Aorta (tissue), 5 donors: ENCODE measurements at regions of chrX and their contacts with region 1.

Region 1: GRCh38 chrX:17788439-17788838 is 51.1 kb downstream of the SCML1 start:
- DNase-seq: peak in 1 of 2 donors; percentile 79
- ATAC-seq: peak; percentile 84
- H3K4me3 ChIP-seq: no peak overlapping the region
- H3K27ac ChIP-seq: no peak overlapping the region
- H3K4me1 ChIP-seq: no peaks in the 10 kb centered on the region
- H3K27me3 ChIP-seq: no peaks in the 10 kb centered on the region

Region 2: GRCh38 chrX:16979226-16979625 is 809.2 kb before region 1 on chrX:
- intact Hi-C with region 1: no loop called
- DNase-seq: no peak
- ATAC-seq: no peak
- H3K4me3 ChIP-seq: no peak overlapping the region
- H3K27ac ChIP-seq: no peak overlapping the region
- H3K4me1 ChIP-seq: no peaks in the 10 kb centered on the region
- H3K27me3 ChIP-seq: no peaks in the 10 kb centered on the region

Region 3: DNA sequence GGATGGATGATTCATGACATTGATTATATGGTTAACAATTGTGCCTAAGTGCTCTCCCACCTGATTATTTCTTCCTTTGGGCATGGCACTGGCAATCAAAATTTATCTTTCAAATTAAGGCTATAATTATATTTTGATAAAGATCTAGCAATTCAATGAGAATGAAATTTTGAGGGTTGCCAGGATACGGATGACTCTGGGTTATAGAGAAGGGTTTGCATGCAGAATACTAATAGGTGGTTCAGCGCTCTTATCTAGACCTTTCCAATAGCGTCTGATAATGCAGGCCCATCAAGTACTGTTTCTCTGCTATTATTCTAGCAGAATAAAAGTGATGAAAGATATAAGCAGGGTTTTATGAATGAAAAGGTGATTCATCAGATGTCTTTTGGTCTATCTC is 126.0 kb before region 1 on chrX:
- intact Hi-C with region 1: no loop called
- DNase-seq: no peak
- ATAC-seq: no peak
- H3K4me3 ChIP-seq: no peak overlapping the region
- H3K27ac ChIP-seq: no peak overlapping the region
- H3K4me1 ChIP-seq: peaks cover 0 to 4% of the 10 kb centered on the region in 2 donors
- H3K27me3 ChIP-seq: no peaks in the 10 kb centered on the region

Region 4: DNA sequence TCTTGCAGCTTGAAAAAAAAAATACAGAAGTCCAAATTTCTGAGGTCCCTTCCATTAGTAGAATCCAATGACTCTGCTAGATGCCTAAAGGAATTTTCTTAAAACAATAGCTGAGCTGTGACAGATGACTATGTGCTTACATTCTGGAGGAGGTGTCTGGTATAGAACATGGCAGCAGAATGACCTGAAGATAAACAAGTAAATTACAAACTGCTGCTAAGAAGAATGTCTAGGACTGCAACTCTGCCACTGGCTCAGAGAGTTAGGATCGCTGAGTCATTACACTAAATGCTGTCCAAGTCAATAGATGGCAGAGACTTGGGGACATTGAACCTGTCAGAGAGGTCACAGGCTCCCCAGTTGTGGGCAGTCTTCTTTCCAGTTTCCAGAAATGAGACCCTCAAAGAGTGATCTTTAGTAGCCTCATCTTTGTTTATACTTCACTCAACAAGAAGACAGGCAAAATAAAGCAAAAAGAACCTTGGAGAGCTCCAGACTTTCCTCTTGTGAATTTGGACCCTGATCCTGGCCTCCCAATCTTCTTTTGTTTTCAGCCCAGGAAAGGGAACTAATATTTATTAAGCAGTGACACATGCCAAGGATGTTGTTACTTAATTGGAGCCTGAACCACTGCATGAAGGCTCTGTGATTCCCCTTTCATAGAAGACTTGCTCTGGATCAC is 107.6 kb before region 1 on chrX:
- intact Hi-C with region 1: no loop called
- DNase-seq: no peak
- ATAC-seq: no peak
- H3K4me3 ChIP-seq: no peak overlapping the region
- H3K27ac ChIP-seq: no peak overlapping the region
- H3K4me1 ChIP-seq: peaks cover 0 to 2% of the 10 kb centered on the region in 2 donors
- H3K27me3 ChIP-seq: no peaks in the 10 kb centered on the region

Region 5: DNA sequence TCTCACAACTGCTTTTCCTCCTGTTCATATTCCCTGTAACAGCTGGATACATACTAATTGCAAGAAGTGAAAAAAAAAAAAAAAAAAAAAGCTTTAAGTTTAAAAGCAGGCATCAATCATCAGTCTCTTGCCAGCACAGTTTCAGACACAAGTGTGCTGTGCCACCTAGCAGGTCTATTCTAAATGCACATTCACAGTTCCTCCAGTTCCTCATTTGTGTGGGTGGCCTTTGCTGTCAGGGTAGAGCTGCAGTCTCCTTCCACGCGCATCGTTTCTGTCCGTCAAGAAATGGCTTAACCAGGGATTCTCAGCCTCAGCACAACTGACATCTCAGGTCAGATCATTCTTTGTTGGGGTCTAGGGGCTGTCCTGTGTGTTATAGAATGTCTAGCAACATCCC is 10.5 kb after region 1 on chrX:
- intact Hi-C with region 1: loop called in 1 of 2 experiments (anchors 1 kb)
- DNase-seq: no peak
- ATAC-seq: no peak
- H3K4me3 ChIP-seq: no peak overlapping the region
- H3K27ac ChIP-seq: no peak overlapping the region
- H3K4me1 ChIP-seq: no peaks in the 10 kb centered on the region
- H3K27me3 ChIP-seq: no peaks in the 10 kb centered on the region